ENCODE measurements at regions of chr6 and their contacts with region 1.

Region 1: DNA sequence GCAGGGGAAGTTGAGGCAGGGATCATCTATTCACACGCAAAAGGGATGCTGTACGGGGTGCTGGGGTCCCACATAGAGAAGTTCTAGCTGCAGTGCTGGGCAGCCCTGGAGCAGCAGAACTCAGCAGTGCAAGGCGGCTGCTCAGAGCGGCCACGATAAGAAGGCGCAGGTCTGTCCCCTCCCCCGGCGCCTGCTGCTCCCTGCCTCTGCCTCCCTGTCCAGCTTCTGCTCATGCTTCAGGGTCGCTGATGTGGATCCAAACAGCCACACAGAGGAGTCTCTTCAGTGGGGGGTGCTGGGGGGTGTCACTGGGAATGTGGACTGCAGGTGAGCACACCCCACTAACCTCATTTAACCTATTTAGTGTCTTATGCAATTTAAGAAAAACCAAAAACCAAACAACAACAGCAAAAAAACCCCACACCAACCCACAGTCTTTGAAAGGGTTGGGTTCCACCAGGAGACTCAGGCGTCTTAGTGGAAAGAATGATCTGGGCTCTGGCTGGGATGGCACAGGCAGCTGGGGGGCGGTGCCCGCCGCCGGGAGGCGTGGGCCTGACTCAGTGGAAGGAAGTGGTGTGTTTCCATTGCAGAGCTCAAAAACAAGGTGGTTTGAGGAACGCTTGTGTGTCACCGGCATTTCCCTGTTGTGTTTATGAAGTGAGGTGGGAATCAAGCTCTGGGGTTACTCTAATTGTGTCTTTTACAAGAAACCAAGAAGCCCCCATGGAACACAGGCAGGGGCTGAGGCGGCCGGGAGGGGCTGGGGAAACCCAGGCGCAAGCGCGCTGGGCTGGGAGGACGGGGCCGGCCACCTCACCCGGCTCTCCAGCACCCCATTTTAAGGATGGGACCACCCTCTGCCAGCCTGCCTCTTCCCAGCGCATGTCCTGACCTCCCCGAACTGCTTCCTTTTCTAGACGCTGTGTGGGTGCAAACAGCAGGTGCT is 55.1 kb downstream of the IRF4 start:
- DNase-seq: peak; percentile 97
- H3K4me3 Mint-ChIP-seq: peak overlapping the region; percentile 73
- H3K27ac Mint-ChIP-seq: peak overlapping the region; percentile 98
- H3K4me1 Mint-ChIP-seq: peaks cover 63% of the 10 kb centered on the region
- H3K27me3 Mint-ChIP-seq: peaks cover 2% of the 10 kb centered on the region

Region 2: DNA sequence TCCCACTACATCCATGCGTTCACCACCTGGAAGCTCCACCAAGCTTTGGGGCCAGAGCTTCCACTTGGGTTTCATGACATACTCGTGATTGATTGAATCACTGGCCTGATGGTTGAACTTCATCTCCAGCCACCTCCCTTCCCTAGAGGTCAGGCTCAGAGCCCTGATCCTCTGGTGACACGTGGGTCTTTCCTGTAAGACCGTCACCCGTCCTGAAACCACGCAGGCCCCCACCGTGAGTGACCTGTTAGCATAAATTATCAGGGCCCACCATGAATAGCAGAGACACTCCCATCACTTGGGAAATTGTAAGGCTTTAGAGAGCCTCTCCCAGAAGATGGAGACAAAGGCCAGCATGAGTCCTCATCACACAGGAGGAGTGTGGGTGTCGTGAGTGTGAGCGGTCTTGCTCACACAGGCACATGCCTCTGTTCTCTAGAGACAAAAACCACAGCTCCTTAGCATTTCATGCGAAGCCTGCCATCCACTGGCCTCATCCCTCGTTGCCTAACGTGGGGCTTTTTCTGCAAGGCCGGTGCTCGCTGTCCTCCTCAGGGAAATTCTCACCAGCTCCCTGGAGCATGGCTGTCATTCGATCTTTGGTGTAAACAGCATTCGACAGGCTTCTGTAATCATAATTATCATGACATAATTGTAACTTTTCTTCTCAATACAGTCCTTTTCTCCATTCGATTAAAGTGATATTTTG is 219.5 kb before region 1 on chr6:
- intact Hi-C with region 1: loop called (anchors 5 kb)
- DNase-seq: no peak
- H3K4me3 Mint-ChIP-seq: no peak overlapping the region
- H3K27ac Mint-ChIP-seq: peak overlapping the region; percentile 58
- H3K4me1 Mint-ChIP-seq: peaks cover 61% of the 10 kb centered on the region
- H3K27me3 Mint-ChIP-seq: no peaks in the 10 kb centered on the region

Region 3: GRCh38 chr6:399785-400534 is 46.7 kb before region 1 on chr6:
- intact Hi-C with region 1: loop called (anchors 1 kb)
- DNase-seq: peak; percentile 87
- H3K4me3 Mint-ChIP-seq: peak overlapping the region; percentile 80
- H3K27ac Mint-ChIP-seq: peak overlapping the region; percentile 87
- H3K4me1 Mint-ChIP-seq: peaks cover 88% of the 10 kb centered on the region
- H3K27me3 Mint-ChIP-seq: no peaks in the 10 kb centered on the region

Region 4: GRCh38 chr6:431986-432385 is 14.7 kb before region 1 on chr6:
- intact Hi-C with region 1: loop called (anchors 1 kb)
- DNase-seq: peak; percentile 90
- H3K4me3 Mint-ChIP-seq: peak overlapping the region; percentile 14
- H3K27ac Mint-ChIP-seq: peak overlapping the region; percentile 67
- H3K4me1 Mint-ChIP-seq: peaks cover 72% of the 10 kb centered on the region
- H3K27me3 Mint-ChIP-seq: no peaks in the 10 kb centered on the region

Region 5: DNA sequence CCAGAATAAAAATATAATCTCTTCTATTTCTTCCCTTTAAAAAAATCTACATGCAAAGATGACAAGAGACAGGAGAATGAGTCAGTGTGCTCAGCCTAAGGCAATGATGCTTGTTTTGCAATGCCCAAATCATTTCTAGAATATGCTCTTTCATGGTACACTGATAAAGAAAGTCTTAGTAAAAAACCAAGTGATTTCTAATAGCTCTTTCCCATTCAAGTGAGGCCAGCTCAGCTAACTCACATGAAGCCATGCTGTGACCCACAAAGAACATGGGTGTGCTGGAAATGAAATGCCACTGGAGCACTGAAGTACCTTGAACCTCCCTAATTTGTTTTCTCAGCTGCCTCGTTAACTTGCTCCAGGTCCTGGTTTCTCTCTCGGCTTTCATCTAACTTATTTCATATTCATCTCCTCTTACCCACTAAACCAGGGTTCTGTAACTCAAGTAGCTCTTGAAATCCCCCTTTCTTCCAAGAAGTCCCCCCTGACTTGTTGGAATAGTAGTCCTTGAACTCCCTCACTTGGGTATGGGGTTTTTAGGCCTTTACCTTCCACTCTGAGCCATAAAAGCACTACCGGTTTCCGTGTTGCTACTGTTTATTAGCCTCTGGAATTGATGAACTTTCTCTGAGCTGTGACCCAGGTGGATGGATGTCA is 37.5 kb after region 1 on chr6:
- intact Hi-C with region 1: loop called (anchors 1 kb)
- DNase-seq: peak; percentile 67
- H3K4me3 Mint-ChIP-seq: peak overlapping the region; percentile 51
- H3K27ac Mint-ChIP-seq: peak overlapping the region; percentile 98
- H3K4me1 Mint-ChIP-seq: peaks cover 67% of the 10 kb centered on the region
- H3K27me3 Mint-ChIP-seq: no peaks in the 10 kb centered on the region

Region 6: GRCh38 chr6:498795-499231 is 52.1 kb after region 1 on chr6:
- intact Hi-C with region 1: loop called (anchors 1 kb)
- DNase-seq: peak; percentile 88
- H3K4me3 Mint-ChIP-seq: peak overlapping the region; percentile 78
- H3K27ac Mint-ChIP-seq: peak overlapping the region; percentile 92
- H3K4me1 Mint-ChIP-seq: peaks cover 73% of the 10 kb centered on the region
- H3K27me3 Mint-ChIP-seq: no peaks in the 10 kb centered on the region

Region 7: GRCh38 chr6:548517-548916 is 101.8 kb after region 1 on chr6:
- intact Hi-C with region 1: loop called (anchors 1 kb)
- DNase-seq: peak; percentile 84
- H3K4me3 Mint-ChIP-seq: peak overlapping the region; percentile 67
- H3K27ac Mint-ChIP-seq: peak overlapping the region; percentile 87
- H3K4me1 Mint-ChIP-seq: peaks cover 53% of the 10 kb centered on the region
- H3K27me3 Mint-ChIP-seq: no peaks in the 10 kb centered on the region

Measured in activated CD4-positive, alpha-beta T cell treated with anti-CD3 and anti-CD28 coated beads, Interleukin-2, amount 10 ng/mL, durations not matched to agents 24 days and 14 days (primary cell).